Activated CD4-positive, alpha-beta T cell treated with anti-CD3 and anti-CD28 coated beads, Interleukin-2, amount 10 ng/mL, durations not matched to agents 7 days and 5 days (primary cell): ENCODE measurements at regions of chr6 and their contacts with region 1.

Region 1: GRCh38 chr6:109382576-109383437 is 540 bp upstream of the CD164 start:
- DNase-seq: peak; percentile 93
- H3K4me3 Mint-ChIP-seq: peak overlapping the region; percentile 90
- H3K27ac Mint-ChIP-seq: peak overlapping the region; percentile 98
- H3K4me1 Mint-ChIP-seq: peaks cover 35% of the 10 kb centered on the region
- H3K27me3 Mint-ChIP-seq: no peaks in the 10 kb centered on the region

Region 2: GRCh38 chr6:109024784-109025183 is 358.0 kb before region 1 on chr6:
- CTCF ChIA-PET with region 1: no interaction called
- POLR2A ChIA-PET with region 1: no interaction called
- DNase-seq: no peak
- H3K4me3 Mint-ChIP-seq: no peak overlapping the region
- H3K27ac Mint-ChIP-seq: no peak overlapping the region
- H3K4me1 Mint-ChIP-seq: peaks cover 9% of the 10 kb centered on the region
- H3K27me3 Mint-ChIP-seq: no peaks in the 10 kb centered on the region

Region 3: DNA sequence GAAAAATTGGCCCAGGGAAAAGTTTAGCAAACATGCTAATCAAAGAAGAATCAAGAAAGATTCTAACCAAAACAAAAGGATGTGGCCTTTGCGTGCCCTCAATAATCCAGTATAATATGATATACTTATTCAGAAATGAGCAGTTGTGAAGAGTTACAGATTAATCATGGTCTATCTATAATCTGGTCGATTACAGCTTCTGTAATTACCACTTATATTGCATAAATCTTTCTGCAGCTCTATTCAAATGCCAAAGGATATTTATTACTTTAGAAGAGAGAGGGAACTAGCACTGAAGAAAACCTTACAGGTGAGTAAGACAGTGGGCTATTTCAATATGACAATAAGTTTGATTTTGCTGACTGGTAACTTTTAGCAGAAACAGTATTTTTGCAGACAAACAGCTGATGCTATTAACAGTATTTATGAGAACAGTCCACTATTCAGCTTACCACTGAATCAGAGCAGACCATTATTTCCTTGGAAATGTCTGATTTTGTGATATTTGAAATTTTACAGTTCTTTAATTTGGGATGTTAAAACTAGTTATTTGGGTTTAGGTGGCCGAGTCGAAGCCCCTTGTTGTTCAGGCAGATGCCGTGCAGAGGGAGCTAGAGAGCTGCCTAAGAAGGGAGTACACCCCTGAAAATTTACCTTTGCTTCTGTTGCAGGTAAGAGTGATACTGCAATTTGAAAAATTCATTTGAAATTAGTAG is 195.2 kb before region 1 on chr6:
- CTCF ChIA-PET with region 1: interaction called, 24 read pairs
- POLR2A ChIA-PET with region 1: no interaction called
- DNase-seq: peak; percentile 63
- H3K4me3 Mint-ChIP-seq: no peak overlapping the region
- H3K27ac Mint-ChIP-seq: no peak overlapping the region
- H3K4me1 Mint-ChIP-seq: peaks cover 1% of the 10 kb centered on the region
- H3K27me3 Mint-ChIP-seq: peaks cover 42% of the 10 kb centered on the region

Region 4: GRCh38 chr6:109194880-109195279 is 187.9 kb before region 1 on chr6:
- CTCF ChIA-PET with region 1: interaction called, 11 read pairs
- POLR2A ChIA-PET with region 1: no interaction called
- DNase-seq: no peak
- H3K4me3 Mint-ChIP-seq: no peak overlapping the region
- H3K27ac Mint-ChIP-seq: no peak overlapping the region
- H3K4me1 Mint-ChIP-seq: peaks cover 3% of the 10 kb centered on the region
- H3K27me3 Mint-ChIP-seq: no peaks in the 10 kb centered on the region

Region 5: GRCh38 chr6:109212683-109213082 is 170.1 kb before region 1 on chr6:
- CTCF ChIA-PET with region 1: no interaction called
- POLR2A ChIA-PET with region 1: no interaction called
- DNase-seq: no peak
- H3K4me3 Mint-ChIP-seq: no peak overlapping the region
- H3K27ac Mint-ChIP-seq: no peak overlapping the region
- H3K4me1 Mint-ChIP-seq: no peaks in the 10 kb centered on the region
- H3K27me3 Mint-ChIP-seq: peaks cover 34% of the 10 kb centered on the region

Region 6: GRCh38 chr6:109315341-109316110 is 67.3 kb before region 1 on chr6:
- CTCF ChIA-PET with region 1: no interaction called
- POLR2A ChIA-PET with region 1: no interaction called
- DNase-seq: no peak
- H3K4me3 Mint-ChIP-seq: no peak overlapping the region
- H3K27ac Mint-ChIP-seq: no peak overlapping the region
- H3K4me1 Mint-ChIP-seq: no peaks in the 10 kb centered on the region
- H3K27me3 Mint-ChIP-seq: no peaks in the 10 kb centered on the region

Region 7: DNA sequence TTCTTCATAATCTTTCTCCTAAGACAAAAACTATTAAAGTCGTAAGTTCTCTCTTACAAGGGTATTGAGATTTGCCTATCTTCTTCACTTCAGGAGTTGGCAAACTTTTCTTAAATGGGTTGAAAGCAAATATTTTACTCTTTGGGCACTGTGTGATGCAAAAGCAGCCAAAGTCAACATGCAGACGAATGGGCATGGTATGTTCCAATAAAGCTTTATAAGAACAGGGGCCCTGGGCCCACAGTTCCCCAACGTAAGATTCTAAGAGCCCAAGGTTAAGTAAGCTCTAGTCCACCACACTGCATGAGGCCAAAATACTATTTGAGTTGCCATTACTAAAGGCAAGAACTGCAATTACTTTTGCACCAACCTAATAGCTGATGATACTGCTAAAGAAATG is 12.0 kb before region 1 on chr6:
- CTCF ChIA-PET with region 1: interaction called, 12 read pairs
- POLR2A ChIA-PET with region 1: interaction called, 9 read pairs
- DNase-seq: no peak
- H3K4me3 Mint-ChIP-seq: no peak overlapping the region
- H3K27ac Mint-ChIP-seq: no peak overlapping the region
- H3K4me1 Mint-ChIP-seq: peaks cover 54% of the 10 kb centered on the region
- H3K27me3 Mint-ChIP-seq: no peaks in the 10 kb centered on the region

Region 8: GRCh38 chr6:109397020-109397419 is 14.2 kb after region 1 on chr6:
- CTCF ChIA-PET with region 1: interaction called, 36 read pairs
- POLR2A ChIA-PET with region 1: interaction called, 4 read pairs
- DNase-seq: no peak
- H3K4me3 Mint-ChIP-seq: no peak overlapping the region
- H3K27ac Mint-ChIP-seq: no peak overlapping the region
- H3K4me1 Mint-ChIP-seq: no peaks in the 10 kb centered on the region
- H3K27me3 Mint-ChIP-seq: no peaks in the 10 kb centered on the region

Region 9: DNA sequence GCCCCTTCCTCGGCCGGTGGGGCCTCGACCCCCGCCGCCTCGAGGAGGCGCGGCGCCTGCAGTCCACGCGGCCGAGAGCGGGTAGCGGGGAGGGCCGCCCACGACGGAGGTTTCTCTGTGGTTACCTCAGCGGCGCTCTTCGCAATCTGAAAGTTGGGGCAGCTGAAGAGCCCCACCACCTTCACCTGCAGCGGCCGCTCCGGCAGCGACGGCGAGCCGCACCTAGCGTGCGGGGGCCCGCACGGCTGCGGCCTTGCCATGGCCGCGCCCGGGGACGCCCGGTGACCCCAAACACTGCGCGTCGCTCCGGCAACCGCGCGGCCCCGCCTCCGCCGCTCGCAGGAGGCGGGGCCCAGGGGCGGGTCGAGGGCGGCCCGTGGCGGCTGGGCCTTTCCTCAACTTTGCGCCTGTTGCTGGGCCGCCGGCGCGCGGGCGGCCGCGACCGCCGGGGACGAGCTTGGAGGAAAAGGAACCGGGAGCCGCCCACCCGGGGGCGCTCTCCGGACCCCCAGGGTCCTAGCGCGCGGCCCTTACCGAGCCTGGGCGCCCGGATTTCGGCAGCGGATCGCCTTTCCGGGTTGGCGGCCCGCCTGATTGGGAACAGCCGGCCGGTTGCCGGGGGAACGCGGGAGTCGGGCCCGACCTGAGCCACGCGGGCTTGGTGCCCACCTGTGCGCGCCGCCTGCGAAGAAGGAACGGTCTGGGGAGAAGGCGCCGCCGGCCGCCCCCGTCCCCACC is 57.7 kb after region 1 on chr6 and contains the starts of genes PPIL6 and SMPD2:
- CTCF ChIA-PET with region 1: interaction called, 10 read pairs
- POLR2A ChIA-PET with region 1: no interaction called
- DNase-seq: peak; percentile 78
- H3K4me3 Mint-ChIP-seq: peak within 1 kb of the TSS; percentile 88
- H3K27ac Mint-ChIP-seq: peak within 1 kb of the TSS; percentile 89
- H3K4me1 Mint-ChIP-seq: peaks cover 27% of the 10 kb centered on the region
- H3K27me3 Mint-ChIP-seq: peaks cover 5% of the 10 kb centered on the region
- total RNA-seq, gene PPIL6: 0.17 to 0.22 TPM
- total RNA-seq, gene SMPD2: 13.0 to 14.0 TPM

Region 10: GRCh38 chr6:109561844-109562243 is 179.0 kb after region 1 on chr6:
- CTCF ChIA-PET with region 1: no interaction called
- POLR2A ChIA-PET with region 1: no interaction called
- DNase-seq: no peak
- H3K4me3 Mint-ChIP-seq: no peak overlapping the region
- H3K27ac Mint-ChIP-seq: no peak overlapping the region
- H3K4me1 Mint-ChIP-seq: no peaks in the 10 kb centered on the region
- H3K27me3 Mint-ChIP-seq: no peaks in the 10 kb centered on the region